GM10248 (cell line): ENCODE measurements at regions of chr12 and their contacts with region 1.

Region 1: DNA sequence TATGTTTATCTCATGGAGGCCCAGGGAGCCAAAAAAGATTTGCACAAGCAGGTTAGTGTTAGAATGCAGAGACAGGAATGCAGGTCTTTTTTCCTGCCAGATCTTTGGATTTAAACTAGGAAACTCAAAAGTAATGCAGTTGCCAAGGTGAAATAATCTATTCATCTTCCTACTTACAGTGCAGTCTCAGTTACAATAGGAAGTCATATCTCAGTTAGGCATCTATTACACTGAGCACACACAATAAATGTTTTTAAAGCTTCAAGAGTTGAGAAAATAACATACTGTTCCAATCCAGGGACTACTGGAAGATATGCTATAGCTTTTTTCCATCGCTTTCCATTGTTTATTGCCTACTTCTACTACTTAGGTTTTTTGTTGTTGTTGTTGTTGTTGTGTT is 279.3 kb upstream of the E2F7 start:
- DNase-seq: no peak
- CTCF ChIP-seq: no peak

Region 2: GRCh38 chr12:76952995-76953394 is 391.7 kb before region 1 on chr12:
- CTCF ChIA-PET with region 1: no interaction called
- POLR2A ChIA-PET with region 1: no interaction called
- DNase-seq: no peak
- CTCF ChIP-seq: no peak

Region 3: GRCh38 chr12:77299910-77300669 is 44.6 kb before region 1 on chr12:
- CTCF ChIA-PET with region 1: no interaction called
- POLR2A ChIA-PET with region 1: no interaction called
- DNase-seq: no peak
- CTCF ChIP-seq: no peak

Region 4: DNA sequence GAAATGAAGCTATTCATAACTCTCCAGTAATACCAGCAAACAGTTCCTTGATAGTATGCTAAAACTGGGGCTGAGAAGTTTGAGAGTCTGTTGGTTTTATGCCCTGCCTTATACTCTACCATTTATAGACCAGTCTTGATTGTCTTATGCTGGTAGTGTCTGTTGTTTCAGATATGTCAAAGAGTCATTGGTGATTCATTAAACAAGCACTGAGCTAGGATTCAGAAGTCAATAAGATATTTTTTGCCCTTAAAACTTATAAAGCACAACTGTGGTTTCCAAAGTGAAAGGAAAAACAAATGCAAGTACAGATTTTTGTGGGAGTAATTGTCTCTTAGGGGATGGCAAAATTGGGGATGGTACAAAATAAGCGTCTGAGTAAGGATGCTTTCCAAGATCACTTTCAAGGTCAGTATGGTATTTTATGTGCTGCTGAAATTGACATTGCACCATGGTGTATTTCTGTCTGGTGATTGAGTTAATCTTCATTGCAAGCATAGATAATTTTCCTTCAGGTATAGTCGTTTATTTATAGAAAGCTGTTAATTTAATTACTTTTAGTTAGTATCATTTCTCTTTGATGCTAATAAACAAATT is 10.2 kb after region 1 on chr12:
- CTCF ChIA-PET with region 1: interaction called, 11 read pairs
- POLR2A ChIA-PET with region 1: no interaction called
- DNase-seq: no peak
- CTCF ChIP-seq: no peak